GM23248 (cell line): ENCODE measurements at regions of chr19 and their contacts with region 1.

Region 1: DNA sequence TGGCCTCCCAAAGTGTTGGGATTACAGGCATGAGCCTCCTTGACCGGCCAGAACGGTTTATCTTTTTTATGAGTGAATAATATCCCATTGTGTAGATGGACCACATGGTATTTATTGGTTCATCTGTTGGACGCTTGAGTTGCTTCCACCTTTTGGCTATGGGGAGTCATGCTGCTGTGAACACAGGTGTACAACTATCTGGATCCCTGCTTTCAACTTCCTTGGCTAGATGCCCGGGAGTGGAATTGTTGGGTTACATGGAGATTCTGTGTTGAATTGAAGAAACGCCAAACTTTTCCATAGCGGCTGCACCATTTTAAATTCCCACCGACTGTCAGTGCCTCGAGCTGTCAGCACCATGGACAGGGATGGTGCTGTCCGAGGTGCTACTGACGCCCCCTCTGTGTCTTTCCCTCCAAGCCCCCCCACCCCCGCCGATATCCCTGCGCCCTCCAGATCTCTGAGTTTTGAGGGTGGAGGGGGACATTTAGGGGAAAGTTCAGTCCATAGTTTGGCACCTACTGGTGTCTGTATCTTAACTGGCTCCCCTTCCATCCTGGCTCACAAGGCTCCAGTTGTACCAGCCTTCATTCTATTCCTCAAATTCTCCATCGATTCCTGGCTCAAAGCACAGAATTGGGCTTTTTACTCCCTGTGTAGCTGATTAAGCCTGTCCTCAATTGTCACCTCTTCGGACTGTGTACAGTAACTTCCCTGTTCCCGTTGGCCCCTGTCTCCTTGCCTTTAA is 27.3 kb downstream of the PNPLA6 start:
- DNase-seq: peak; percentile 10
- H3K4me3 ChIP-seq: no peak overlapping the region
- H3K27ac ChIP-seq: no peak overlapping the region
- H3K4me1 ChIP-seq: no peaks in the 10 kb centered on the region
- H3K27me3 ChIP-seq: no peaks in the 10 kb centered on the region

Region 2: GRCh38 chr19:7083076-7083956 is 479.5 kb before region 1 on chr19:
- in situ Hi-C with region 1: no loop called
- DNase-seq: peak; percentile 43
- H3K4me3 ChIP-seq: peak overlapping the region; percentile 18
- H3K27ac ChIP-seq: no peak overlapping the region
- H3K4me1 ChIP-seq: no peaks in the 10 kb centered on the region
- H3K27me3 ChIP-seq: no peaks in the 10 kb centered on the region

Region 3: GRCh38 chr19:7674010-7675005 is 111.5 kb after region 1 on chr19:
- in situ Hi-C with region 1: loop called (anchors 10 kb)
- DNase-seq: peak; percentile 74
- H3K4me3 ChIP-seq: no peak overlapping the region
- H3K27ac ChIP-seq: no peak overlapping the region
- H3K4me1 ChIP-seq: no peaks in the 10 kb centered on the region
- H3K27me3 ChIP-seq: peaks cover 18% of the 10 kb centered on the region

Region 4: DNA sequence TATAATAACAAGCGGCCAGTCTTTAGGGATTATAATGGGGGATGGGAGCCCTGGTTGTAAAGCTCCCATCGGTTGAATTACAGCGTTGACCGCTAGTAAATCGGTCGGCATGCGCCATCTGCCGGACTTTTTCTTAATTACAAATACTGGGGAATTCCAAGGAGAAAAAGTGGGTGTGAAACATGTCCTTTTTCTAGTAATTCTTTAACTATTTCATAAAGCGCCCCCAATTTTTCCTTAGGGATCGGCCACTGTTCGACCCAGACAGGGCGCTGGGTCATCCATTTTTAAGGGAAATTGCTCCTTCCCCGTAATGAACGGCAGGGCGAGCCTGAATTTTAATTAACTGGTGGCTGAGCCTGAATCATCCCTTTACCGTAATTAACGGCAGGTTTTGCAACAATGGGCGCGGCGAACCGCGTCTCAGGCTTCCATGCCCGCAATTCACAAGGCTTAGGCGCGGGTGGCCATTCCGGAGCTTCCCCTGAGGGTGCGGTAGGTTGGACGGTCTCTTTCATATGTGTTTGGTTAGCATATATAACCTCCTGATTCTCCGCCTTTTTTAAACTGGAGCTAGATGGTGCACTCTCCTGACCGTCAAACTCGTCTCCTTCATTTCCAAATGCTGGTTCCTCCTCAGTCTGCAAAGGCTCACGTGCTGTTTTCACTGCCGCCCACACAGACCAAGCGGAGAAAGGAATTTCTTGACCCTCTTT is 237.0 kb after region 1 on chr19:
- in situ Hi-C with region 1: loop called (anchors 10 kb)
- DNase-seq: peak; percentile 87
- H3K4me3 ChIP-seq: peak overlapping the region; percentile 62
- H3K27ac ChIP-seq: no peak overlapping the region
- H3K4me1 ChIP-seq: 0 out of 2 replicates have a peak, but pooled peaks cover 3% of the 10 kb centered on the region
- H3K27me3 ChIP-seq: peaks cover 27% of the 10 kb centered on the region